CD8-positive, alpha-beta T cell (primary cell): ENCODE measurements at regions of chr16 and their contacts with region 1.

Region 1: DNA sequence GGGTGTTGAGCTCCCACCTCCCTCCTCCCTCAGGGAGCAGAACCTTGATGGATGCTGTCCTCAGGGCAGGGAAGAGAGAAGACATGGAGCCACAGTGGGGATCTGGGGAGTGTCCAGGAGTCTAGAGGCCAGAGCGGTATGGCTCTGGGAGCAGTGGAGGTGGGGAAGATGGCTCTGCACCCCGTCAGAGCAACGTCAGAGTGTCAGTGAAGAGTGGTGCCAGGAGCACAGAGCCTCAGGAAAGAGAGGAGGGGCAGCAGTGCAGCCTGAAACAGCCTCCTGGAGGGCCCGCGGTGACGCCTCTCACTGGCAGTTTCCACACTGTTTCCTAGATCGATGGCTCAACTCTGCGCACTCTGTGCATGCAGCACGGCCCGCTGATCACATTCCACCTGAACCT is 23.2 kb upstream of the SLC5A11 start:
- DNase-seq: no peak
- ATAC-seq: no peak
- H3K4me3 ChIP-seq: no peak overlapping the region
- H3K4me3 Mint-ChIP-seq: no peak overlapping the region
- H3K27ac ChIP-seq: no peak overlapping the region
- H3K27ac Mint-ChIP-seq: peak overlapping the region; percentile 52
- H3K4me1 ChIP-seq: no peaks in the 10 kb centered on the region
- H3K4me1 Mint-ChIP-seq: no peaks in the 10 kb centered on the region
- H3K27me3 ChIP-seq: no peaks in the 10 kb centered on the region
- H3K27me3 Mint-ChIP-seq: no peaks in the 10 kb centered on the region
- CTCF ChIP-seq: no peak

Region 2: GRCh38 chr16:24789881-24790280 is 32.7 kb before region 1 on chr16:
- CTCF ChIA-PET with region 1: no interaction called
- POLR2A ChIA-PET with region 1: no interaction called
- intact Hi-C with region 1: loop called in 1 of 2 experiments (anchors 2 kb)
- DNase-seq: no peak
- ATAC-seq: no peak
- H3K4me3 ChIP-seq: no peak overlapping the region
- H3K4me3 Mint-ChIP-seq: no peak overlapping the region
- H3K27ac ChIP-seq: no peak overlapping the region
- H3K27ac Mint-ChIP-seq: no peak overlapping the region
- H3K4me1 ChIP-seq: no peaks in the 10 kb centered on the region
- H3K4me1 Mint-ChIP-seq: peaks cover 4% of the 10 kb centered on the region
- H3K27me3 ChIP-seq: no peaks in the 10 kb centered on the region
- H3K27me3 Mint-ChIP-seq: no peaks in the 10 kb centered on the region
- CTCF ChIP-seq: no peak